K562 (cell line): ENCODE measurements at regions of chr17 and their contacts with region 1.

Region 1: DNA sequence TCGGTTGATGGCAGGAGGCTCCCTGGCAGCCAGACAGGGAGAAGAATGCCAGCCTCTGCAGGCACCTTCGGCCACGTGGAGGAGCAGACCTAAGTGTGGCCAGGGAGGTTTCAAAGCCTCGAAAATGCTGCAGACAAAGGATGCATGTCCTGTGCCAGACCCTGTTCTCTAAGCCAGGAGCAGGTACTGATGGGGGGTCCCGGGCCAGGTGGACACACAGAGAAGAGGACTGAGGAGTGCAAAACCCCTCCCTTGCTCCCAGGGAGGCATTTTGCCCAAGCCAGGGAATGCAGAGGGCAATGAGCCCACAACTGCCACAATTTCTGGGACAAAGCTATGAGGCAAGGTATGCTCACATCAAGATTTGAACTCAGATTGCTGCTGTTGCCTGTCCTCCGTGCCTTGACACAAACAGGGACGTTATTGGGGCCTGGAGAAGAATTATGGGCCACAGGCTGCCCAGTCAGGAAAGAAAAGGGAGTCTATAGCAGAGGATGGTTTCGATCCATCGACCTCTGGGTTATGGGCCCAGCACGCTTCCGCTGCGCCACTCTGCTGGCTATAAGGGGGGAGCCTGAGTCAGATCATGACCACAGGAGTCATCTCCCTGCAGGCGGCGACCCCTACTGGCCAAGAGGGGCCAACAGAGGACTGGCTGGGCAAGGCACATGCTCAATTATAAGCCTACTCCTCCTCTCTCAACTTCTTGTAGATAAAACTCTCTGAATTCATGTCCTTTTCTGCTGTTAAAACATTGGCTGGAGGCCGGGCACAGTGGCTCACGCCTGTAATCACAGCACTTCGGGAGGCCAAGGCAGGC is 25.1 kb upstream of the FOXK2 start:
- DNase-seq: peak; percentile 88 to 95 (median 92)
- ATAC-seq: peak; percentile 92
- H3K4me3 ChIP-seq: peak overlapping the region; percentile 44
- H3K27ac ChIP-seq: peak overlapping the region; percentile 50; the same call in 1 of the 3 replicates
- H3K4me1 ChIP-seq: peaks cover 5 to 48% of the 10 kb centered on the region in 2 experiments; a peak in 4 of 5 replicates
- H3K27me3 ChIP-seq: no peaks in the 10 kb centered on the region
- CTCF ChIP-seq: peak; percentile 79 to 97 (median 93)
- EP300 ChIP-seq: peak; percentile 56; the same call in 1 of the 2 replicates
- POLR2A ChIP-seq: no peak
- RAD21 ChIP-seq: peak; percentile 63 to 68

Region 2: GRCh38 chr17:82407255-82407654 is 87.2 kb before region 1 on chr17:
- CTCF ChIA-PET with region 1: no interaction called
- POLR2A ChIA-PET with region 1: no interaction called
- in situ Hi-C with region 1: no loop called
- intact Hi-C with region 1: no loop called
- DNase-seq: no peak
- ATAC-seq: no peak
- H3K4me3 ChIP-seq: no peak overlapping the region
- H3K27ac ChIP-seq: no peak overlapping the region
- H3K4me1 ChIP-seq: peaks cover 0 to 16% of the 10 kb centered on the region in 2 experiments; a peak in 1 of 5 replicates
- H3K27me3 ChIP-seq: no peaks in the 10 kb centered on the region
- CTCF ChIP-seq: no peak
- EP300 ChIP-seq: no peak
- POLR2A ChIP-seq: no peak
- RAD21 ChIP-seq: no peak

Region 3: DNA sequence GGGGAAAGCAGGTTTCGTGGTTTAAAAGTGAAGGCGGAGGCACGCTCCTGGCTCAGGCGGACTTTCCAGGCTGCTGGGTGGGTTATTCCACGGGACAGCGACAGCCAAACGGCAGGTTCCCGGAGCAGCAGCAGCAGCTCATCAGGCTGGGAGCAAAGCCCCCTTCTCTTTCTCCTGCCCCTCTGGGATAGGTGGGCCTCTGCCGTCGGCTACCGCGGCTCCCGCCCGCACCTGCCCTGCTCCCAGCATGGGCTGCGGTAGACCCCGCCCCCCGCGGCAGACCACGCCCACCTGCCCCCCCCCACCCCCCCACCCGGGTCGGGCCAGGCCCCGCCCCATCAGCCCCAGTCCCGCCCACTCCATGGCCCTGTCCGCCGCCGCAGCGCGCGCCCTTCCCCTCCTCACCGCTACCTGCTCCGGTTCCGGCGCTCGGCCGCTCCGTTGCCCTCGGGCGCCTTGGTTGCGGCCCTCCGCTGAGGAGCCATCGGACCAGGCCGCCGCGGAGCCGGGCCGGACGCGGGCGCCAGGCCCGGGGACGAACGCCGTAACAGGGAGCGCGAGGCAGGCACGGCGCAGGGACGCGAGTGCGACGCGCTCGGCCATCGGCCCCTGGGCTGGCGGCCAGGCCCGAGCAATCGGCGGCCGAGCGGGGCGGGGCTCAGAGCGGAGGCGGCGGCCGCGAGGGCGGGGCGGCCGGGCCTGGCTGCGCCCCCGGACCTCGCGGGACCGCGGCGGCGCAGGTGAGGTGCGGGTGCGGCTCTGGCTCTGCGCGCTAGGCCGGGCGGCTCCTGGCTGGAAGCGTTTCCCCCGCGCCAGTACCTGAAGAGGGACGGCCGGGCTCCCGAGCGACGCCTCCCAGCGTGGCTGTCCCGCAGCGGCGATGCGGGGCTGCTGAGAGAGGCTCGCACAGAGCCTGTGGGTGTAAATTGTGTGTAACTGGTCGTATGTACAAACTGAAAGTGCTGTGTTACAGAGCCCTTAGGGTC is 76.2 kb before region 1 on chr17 and contains the starts of genes HEXD and OGFOD3:
- CTCF ChIA-PET with region 1: no interaction called
- POLR2A ChIA-PET with region 1: no interaction called
- in situ Hi-C with region 1: no loop called
- intact Hi-C with region 1: loop called (anchors 1 kb)
- DNase-seq: peak; percentile 91 to 100 (median 100)
- ATAC-seq: peak; percentile 85
- H3K4me3 ChIP-seq: peak within 1 kb of the TSS; percentile 90
- H3K27ac ChIP-seq: peak within 1 kb of the TSS; percentile 92
- H3K4me1 ChIP-seq: peaks cover 8 to 19% of the 10 kb centered on the region in 2 experiments
- H3K27me3 ChIP-seq: no peaks in the 10 kb centered on the region
- CTCF ChIP-seq: no peak
- EP300 ChIP-seq: no peak
- POLR2A ChIP-seq: peak; percentile 87
- RAD21 ChIP-seq: 0 out of 4 replicates have a peak, but pooled peaks of 1 of the 2 experiments have one; percentile 2
- polyA plus RNA-seq, gene HEXD: 1.0 TPM
- polyA plus RNA-seq, gene OGFOD3: 0.69 to 1.8 TPM

Region 4: DNA sequence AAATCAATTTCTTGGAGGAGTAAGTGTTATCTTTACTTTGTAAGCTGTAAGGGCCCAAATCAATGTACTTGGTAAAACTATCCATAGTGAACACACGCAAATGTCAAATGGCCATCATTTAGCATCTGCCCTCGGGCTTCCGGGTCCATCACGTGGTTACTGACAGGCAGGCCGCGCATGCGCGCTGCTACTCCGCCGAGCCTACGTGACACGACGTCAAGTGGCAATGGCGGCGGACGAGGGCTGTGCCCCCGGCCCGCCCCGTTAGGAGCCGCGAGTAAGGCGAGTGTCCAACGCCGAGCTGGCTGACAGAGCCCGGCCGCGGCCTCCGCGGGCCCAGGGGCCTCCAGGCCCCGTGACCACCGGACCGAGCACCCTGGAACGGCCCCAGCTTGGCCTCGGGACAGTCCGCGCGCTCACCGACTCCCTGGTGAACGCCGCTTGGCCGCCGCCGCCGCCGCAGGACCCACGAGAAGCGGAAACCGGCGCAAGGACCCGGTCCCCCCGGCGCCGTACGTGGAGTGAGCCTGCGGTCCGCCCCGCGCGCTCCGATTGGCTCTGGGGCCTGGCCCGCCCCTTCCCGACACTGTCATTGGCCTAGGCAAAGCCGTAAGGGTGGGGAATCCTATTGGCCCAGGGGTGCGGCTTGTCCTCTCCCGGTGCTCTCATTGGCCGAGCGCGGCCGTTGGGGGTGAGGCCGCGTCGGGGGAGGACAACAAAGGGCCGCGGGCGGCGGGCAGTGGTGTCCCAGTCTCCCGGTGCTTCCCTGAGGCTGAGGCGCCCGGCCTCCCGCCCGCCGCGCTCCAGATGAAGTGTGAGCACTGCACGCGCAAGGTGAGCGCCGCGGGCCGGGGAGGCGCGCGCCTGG is 36.2 kb before region 1 on chr17 and contains the start of gene NARF:
- CTCF ChIA-PET with region 1: no interaction called
- POLR2A ChIA-PET with region 1: interaction called, 4 read pairs
- in situ Hi-C with region 1: no loop called
- intact Hi-C with region 1: loop called (anchors 5 kb)
- DNase-seq: peak; percentile 95 to 99 (median 97)
- ATAC-seq: peak; percentile 95
- H3K4me3 ChIP-seq: peak within 1 kb of the TSS; percentile 83
- H3K27ac ChIP-seq: peak within 1 kb of the TSS; percentile 97
- H3K4me1 ChIP-seq: peaks cover 49 to 67% of the 10 kb centered on the region in 2 experiments
- H3K27me3 ChIP-seq: no peaks in the 10 kb centered on the region
- CTCF ChIP-seq: no peak
- EP300 ChIP-seq: no peak
- POLR2A ChIP-seq: peak; percentile 98
- RAD21 ChIP-seq: peak; percentile 12 to 16; a peak in 2 of 4 replicates
- polyA plus RNA-seq, gene NARF: 60.4 to 114 TPM

Region 5: DNA sequence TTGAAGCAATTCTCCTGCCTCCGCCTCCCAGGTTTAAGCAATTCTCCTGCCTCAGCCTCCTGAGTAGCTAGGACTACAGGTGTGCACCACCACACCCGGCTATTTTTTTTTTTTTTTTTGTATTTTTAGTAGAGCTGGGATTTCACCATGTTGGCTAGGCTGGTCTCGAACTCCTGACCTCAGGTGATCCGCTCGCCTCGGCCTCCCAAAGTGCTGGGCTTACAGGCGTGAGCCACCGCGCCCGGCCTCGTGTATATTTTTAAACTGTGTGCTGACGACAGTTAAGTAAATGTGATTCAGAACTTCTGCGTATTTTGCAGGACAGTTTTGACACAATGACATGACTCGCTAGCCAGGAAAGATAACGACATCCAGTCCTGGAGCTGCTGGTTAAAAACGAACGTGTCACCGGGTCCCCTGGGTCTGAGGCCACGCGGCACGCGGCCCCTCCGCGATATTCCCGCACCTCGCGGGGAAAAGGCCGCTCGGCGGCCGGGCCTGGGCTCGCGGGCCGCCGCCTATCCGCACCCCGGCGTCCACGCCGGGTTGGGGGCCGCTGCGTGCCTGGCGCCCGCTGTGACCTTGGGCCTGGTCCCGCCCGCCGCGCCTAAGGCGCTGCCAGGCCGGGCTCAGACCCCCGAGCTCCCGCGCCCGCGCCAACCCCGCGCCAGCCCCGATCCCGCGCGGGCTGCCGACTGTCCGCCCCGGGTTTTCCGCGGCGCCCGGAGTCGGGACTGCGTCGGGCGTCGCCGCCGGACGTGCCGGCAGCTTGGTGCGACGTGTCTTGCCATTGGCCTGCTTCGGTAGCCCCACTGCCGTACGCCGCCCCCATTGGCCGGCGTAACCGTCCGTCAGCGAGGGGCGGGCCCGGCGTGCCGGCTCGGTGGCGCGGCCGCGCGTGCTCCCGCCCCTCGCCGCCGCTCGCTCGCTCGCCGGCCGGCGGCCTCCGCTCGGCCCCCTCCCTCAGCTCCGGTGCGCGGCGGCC is 24.7 kb after region 1 on chr17 and contains the start of gene FOXK2:
- CTCF ChIA-PET with region 1: no interaction called
- POLR2A ChIA-PET with region 1: interaction called, 8 read pairs
- in situ Hi-C with region 1: no loop called
- intact Hi-C with region 1: loop called (anchors 1 kb)
- DNase-seq: peak; percentile 96 to 100 (median 100)
- ATAC-seq: peak; percentile 97
- H3K4me3 ChIP-seq: peak within 1 kb of the TSS; percentile 94
- H3K27ac ChIP-seq: peak within 1 kb of the TSS; percentile 98
- H3K4me1 ChIP-seq: peaks cover 12 to 19% of the 10 kb centered on the region in 2 experiments; a peak in 4 of 5 replicates
- H3K27me3 ChIP-seq: no peaks in the 10 kb centered on the region
- CTCF ChIP-seq: no peak
- EP300 ChIP-seq: no peak
- POLR2A ChIP-seq: peak; percentile 58
- RAD21 ChIP-seq: no peak
- polyA plus RNA-seq, gene FOXK2: 3.0 to 4.2 TPM

Region 6: GRCh38 chr17:82551779-82552457 is 57.5 kb after region 1 on chr17:
- CTCF ChIA-PET with region 1: interaction called, 5 read pairs
- POLR2A ChIA-PET with region 1: interaction called, 6 read pairs
- in situ Hi-C with region 1: no loop called
- intact Hi-C with region 1: loop called (anchors 5 kb)
- DNase-seq: peak; percentile 75 to 84 (median 78)
- ATAC-seq: peak; percentile 95
- H3K4me3 ChIP-seq: no peak overlapping the region
- H3K27ac ChIP-seq: no peak overlapping the region
- H3K4me1 ChIP-seq: peaks cover 13 to 25% of the 10 kb centered on the region in 2 experiments; a peak in 4 of 5 replicates
- H3K27me3 ChIP-seq: no peaks in the 10 kb centered on the region
- CTCF ChIP-seq: peak; percentile 82 to 85 (median 83)
- EP300 ChIP-seq: 0 out of 2 replicates have a peak, but pooled peaks have one; percentile 26
- POLR2A ChIP-seq: no peak
- RAD21 ChIP-seq: peak; percentile 68 to 81